CD14-positive monocyte (primary cell): ENCODE measurements at regions of chr15 and their contacts with region 1.

Region 1: DNA sequence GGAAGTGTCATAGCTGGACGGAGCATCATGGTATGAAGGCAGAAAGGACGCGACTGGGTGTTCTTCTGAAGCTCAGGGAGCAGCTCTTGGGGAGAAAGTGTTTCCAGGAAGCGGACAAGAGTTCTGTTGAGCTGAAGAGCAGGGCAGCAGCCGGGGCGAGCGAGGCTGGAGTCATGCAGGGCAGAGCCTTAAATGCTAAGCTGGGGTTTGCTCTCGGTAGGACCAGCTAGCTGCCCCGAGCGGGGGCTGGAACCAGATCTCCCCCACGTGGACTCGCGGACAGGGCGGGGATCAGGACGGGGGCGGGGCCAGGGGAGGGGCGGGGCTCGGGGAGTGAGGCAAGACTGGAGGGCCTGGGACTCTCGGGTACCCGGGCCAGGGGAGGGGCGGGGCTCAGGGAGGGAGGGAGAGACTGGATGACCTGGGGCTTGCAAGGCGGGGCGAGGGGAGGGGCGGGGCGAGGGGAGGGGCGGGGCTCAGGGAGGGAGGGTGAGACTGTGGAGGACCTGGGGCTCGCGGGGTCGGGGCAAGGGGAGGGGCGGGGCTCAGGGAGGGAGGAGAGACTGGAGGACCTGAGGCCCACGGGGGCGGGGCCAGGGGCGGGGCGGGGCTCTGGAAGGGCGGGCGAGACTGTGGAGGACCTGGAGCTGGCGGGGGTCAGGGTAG is 486 bp upstream of the FAH start:
- DNase-seq: peak; percentile 69 to 93 (median 90)
- H3K4me3 ChIP-seq: peak overlapping the region; percentile 65 to 82 (median 72)
- H3K4me3 Mint-ChIP-seq: peak overlapping the region; percentile 75
- H3K27ac ChIP-seq: peak overlapping the region; percentile 34 to 63
- H3K27ac Mint-ChIP-seq: peak overlapping the region; percentile 64 to 86 (median 75)
- H3K4me1 ChIP-seq: peaks cover 42 to 46% of the 10 kb centered on the region in 2 donors
- H3K4me1 Mint-ChIP-seq: peaks cover 49% of the 10 kb centered on the region
- H3K27me3 ChIP-seq: no peaks in the 10 kb centered on the region
- H3K27me3 Mint-ChIP-seq: no peaks in the 10 kb centered on the region
- CTCF ChIP-seq: no peak

Region 2: GRCh38 chr15:78872972-78873792 is 1279.1 kb before region 1 on chr15:
- intact Hi-C with region 1: loop called in 1 of 2 experiments (anchors 10 kb)
- DNase-seq: peak; percentile 76 to 87 (median 82)
- H3K4me3 ChIP-seq: peak overlapping the region; percentile 95 to 100 (median 96)
- H3K4me3 Mint-ChIP-seq: peak overlapping the region; percentile 97 to 98
- H3K27ac ChIP-seq: peak overlapping the region; percentile 98 to 100
- H3K27ac Mint-ChIP-seq: peak overlapping the region; percentile 100
- H3K4me1 ChIP-seq: peaks cover 42 to 43% of the 10 kb centered on the region in 2 donors
- H3K4me1 Mint-ChIP-seq: peaks cover 35% of the 10 kb centered on the region
- H3K27me3 ChIP-seq: no peaks in the 10 kb centered on the region
- H3K27me3 Mint-ChIP-seq: peaks cover 1 to 2% (median 2%) of the 10 kb centered on the region in 3 donors
- CTCF ChIP-seq: no peak

Region 3: GRCh38 chr15:80058851-80059785 is 93.2 kb before region 1 on chr15 and contains the start of gene ZFAND6:
- intact Hi-C with region 1: loop called in 1 of 2 experiments (anchors 5 kb)
- DNase-seq: peak; percentile 91 to 95 (median 93)
- H3K4me3 ChIP-seq: peak within 1 kb of the TSS; percentile 66 to 92 (median 90)
- H3K4me3 Mint-ChIP-seq: peak within 1 kb of the TSS; percentile 93 to 94
- H3K27ac ChIP-seq: peak within 1 kb of the TSS; percentile 68 to 95
- H3K27ac Mint-ChIP-seq: peak within 1 kb of the TSS; percentile 86 to 96 (median 91)
- H3K4me1 ChIP-seq: peaks cover 16 to 32% of the 10 kb centered on the region in 2 donors
- H3K4me1 Mint-ChIP-seq: peaks cover 34% of the 10 kb centered on the region
- H3K27me3 ChIP-seq: no peaks in the 10 kb centered on the region
- H3K27me3 Mint-ChIP-seq: peaks cover 0 to 2% (median 1%) of the 10 kb centered on the region in 3 donors
- CTCF ChIP-seq: no peak
- polyA plus RNA-seq, gene ZFAND6: 41.6 to 106 (median 99.6) TPM

Region 4: DNA sequence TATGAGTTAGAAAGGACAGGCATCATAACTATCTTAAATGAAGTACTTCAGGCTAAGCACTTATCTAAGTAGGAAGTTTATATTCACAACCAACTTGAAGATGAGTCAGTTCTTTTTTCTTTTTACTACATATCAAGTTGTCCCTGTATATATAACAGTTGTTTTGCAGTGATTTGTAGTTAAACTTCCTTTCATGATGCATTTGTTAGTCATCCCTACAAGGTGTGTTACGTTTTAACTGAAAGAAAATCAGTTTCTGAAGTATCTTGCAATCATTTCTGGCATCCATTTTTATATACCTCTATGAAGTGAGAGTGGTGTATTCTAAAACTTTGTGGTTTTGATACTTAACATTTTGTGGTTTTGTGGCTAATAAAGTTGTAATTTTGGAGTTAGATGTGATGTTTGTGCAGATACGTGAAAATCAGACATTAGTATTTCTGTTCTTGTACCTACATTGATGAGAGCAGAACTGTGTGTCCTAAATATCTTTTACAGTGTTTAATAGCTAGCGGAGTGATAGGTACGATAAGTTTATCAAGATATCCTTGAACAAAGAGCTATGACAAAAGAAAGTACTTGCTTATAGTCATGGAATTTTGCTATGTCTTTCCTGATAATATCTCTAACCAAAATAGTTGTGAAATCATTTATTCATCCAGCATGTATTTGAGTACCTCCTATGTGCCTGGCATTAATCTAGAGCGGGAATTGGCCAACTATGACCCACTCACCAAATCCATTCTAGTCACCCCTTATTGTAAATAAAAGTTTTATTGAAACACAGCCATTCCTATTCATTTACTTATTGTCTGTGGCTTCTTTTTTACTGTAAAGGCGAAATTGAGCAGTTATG is 46.5 kb before region 1 on chr15:
- intact Hi-C with region 1: no loop called
- DNase-seq: no peak
- H3K4me3 ChIP-seq: no peak overlapping the region
- H3K4me3 Mint-ChIP-seq: no peak overlapping the region
- H3K27ac ChIP-seq: no peak overlapping the region
- H3K27ac Mint-ChIP-seq: peak overlapping the region in 1 of 7 donors; percentile 30
- H3K4me1 ChIP-seq: no peaks in the 10 kb centered on the region
- H3K4me1 Mint-ChIP-seq: peaks cover 8% of the 10 kb centered on the region
- H3K27me3 ChIP-seq: no peaks in the 10 kb centered on the region
- H3K27me3 Mint-ChIP-seq: no peaks in the 10 kb centered on the region
- CTCF ChIP-seq: no peak